Astrocyte of the cerebellum (primary cell): ENCODE measurements at regions of chr2 and their contacts with region 1.

Region 1: GRCh38 chr2:147989809-147990403 is 30.6 kb downstream of the ORC4 start:
- DNase-seq: peak; percentile 43
- H3K4me3 ChIP-seq: no peak overlapping the region
- CTCF ChIP-seq: peak; percentile 60

Region 2: DNA sequence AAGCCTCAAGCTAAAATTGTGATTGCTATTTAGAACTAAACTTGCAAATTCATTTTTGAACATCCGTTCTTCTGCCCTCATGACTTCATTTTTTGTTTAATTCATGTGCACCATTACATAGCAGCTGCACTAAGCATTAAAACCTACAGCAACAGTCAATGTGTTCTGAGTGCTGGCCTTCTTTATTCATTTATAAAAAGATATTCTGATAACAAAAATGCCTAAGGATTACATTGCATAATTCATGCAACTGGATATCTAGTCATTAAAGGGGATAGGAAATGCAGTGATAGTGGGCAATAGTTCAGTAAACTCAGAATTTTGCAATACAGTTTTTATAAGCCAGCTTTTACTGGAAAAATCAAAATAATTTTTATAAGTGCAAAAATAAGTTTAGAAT is 360.3 kb after region 1 on chr2:
- in situ Hi-C with region 1: no loop called
- DNase-seq: no peak
- H3K4me3 ChIP-seq: no peak overlapping the region
- CTCF ChIP-seq: no peak

Region 3: DNA sequence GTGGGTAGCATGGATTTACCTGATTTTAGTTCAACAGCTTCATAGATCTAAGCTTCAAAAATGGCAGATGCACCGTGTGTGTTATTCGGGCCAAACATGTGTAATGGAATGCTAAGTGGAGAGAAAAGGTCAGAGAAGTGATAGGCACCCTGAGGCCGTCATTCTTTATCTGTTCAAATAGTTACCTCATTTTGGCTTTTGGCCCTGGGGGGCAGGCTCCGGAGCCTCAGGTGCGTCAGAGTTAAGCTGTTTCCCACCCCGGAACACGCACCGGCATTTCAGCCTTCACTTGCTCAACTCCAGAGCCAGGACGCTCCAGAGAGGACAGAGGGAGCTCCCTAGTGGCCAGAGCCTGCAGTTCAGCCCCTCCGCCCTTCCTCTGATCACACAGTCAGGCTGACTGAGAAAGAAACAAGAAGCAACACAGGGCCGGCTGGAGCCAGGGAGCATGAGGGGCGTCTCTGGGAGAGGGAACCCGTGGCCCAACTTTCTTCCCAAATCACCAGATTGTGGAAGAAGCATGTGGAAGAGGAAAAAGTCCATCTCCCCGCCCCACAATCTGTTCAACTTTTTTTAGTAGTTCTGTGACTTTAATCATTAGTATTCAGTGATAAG is 519.5 kb after region 1 on chr2:
- in situ Hi-C with region 1: loop called (anchors 25 kb)
- DNase-seq: peak; percentile 63
- H3K4me3 ChIP-seq: peak overlapping the region; percentile 11
- CTCF ChIP-seq: peak; percentile 98

Region 4: GRCh38 chr2:148989882-148990493 is 1000.1 kb after region 1 on chr2:
- in situ Hi-C with region 1: loop called (anchors 25 kb)
- DNase-seq: peak; percentile 80
- H3K4me3 ChIP-seq: no peak overlapping the region
- CTCF ChIP-seq: peak; percentile 72